CD4-positive, alpha-beta memory T cell (primary cell): ENCODE measurements at regions of chr3 and their contacts with region 1.

Region 1: GRCh38 chr3:97910931-97911351 is 61.3 kb downstream of the RIOX2 start:
- DNase-seq: peak in 4 of 5 donors; percentile 58 to 68 (median 62)
- H3K4me3 ChIP-seq: no peak overlapping the region
- H3K4me3 Mint-ChIP-seq: peak overlapping the region; percentile 77 to 91 (median 88)
- H3K27ac ChIP-seq: peak overlapping the region; percentile 34
- H3K27ac Mint-ChIP-seq: peak overlapping the region; percentile 92 to 97 (median 96)
- H3K4me1 ChIP-seq: peaks cover 45% of the 10 kb centered on the region
- H3K4me1 Mint-ChIP-seq: peaks cover 27 to 42% (median 34%) of the 10 kb centered on the region in 4 donors
- H3K27me3 ChIP-seq: no peaks in the 10 kb centered on the region
- H3K27me3 Mint-ChIP-seq: no peaks in the 10 kb centered on the region

Region 2: DNA sequence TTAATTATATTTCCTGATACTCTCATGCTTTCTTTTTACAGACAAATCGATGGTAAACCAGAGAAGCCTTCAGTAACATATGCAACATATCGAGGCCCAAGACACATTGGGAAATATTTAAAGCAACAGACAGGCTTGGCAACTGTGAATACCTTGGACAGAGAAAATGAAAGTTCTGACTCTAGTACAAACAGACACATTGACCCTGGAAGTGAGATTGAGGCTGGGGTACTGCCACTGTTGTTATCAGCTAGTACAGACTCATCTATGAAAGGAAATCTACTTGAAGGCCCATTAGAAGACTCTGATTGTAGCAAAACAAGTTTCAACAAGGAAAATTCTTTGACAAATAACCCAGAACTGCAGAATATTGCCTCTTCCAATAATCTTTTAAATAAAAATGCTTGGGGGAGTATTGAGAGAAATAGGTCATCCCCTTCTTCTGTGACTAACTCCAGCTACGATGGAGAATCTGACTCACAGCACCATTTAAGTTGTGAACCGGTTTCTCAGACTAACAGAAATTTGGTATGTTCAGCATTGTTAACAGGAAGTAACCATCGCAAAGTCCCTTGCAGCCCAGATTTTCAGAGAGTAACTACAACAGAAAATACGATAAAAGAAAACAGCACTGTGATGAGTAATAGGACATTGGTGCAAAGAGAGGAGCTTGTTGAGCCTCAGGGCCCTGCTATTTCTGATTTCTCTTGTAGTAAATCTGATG is 39.0 kb before region 1 on chr3:
- CTCF ChIA-PET with region 1: no interaction called
- POLR2A ChIA-PET with region 1: interaction called, 10 read pairs
- intact Hi-C with region 1: loop called (anchors 5 kb)
- DNase-seq: peak; percentile 17 to 58 (median 30)
- H3K4me3 ChIP-seq: no peak overlapping the region
- H3K4me3 Mint-ChIP-seq: peak overlapping the region; percentile 33 to 86 (median 52)
- H3K27ac ChIP-seq: no peak overlapping the region
- H3K27ac Mint-ChIP-seq: peak overlapping the region; percentile 71 to 88 (median 81)
- H3K4me1 ChIP-seq: peaks cover 18% of the 10 kb centered on the region
- H3K4me1 Mint-ChIP-seq: peaks cover 18 to 26% (median 21%) of the 10 kb centered on the region in 4 donors
- H3K27me3 ChIP-seq: no peaks in the 10 kb centered on the region
- H3K27me3 Mint-ChIP-seq: no peaks in the 10 kb centered on the region

Region 3: GRCh38 chr3:97971677-97972567 is 61.0 kb after region 1 on chr3 and contains the start of gene RIOX2:
- CTCF ChIA-PET with region 1: no interaction called
- POLR2A ChIA-PET with region 1: interaction called, 3 read pairs
- intact Hi-C with region 1: loop called (anchors 1 kb)
- DNase-seq: peak; percentile 74 to 84 (median 80)
- H3K4me3 ChIP-seq: peak within 1 kb of the TSS in 1 of 2 donors; percentile 54
- H3K4me3 Mint-ChIP-seq: peak within 1 kb of the TSS; percentile 88 to 96 (median 94)
- H3K27ac ChIP-seq: peak within 1 kb of the TSS; percentile 41
- H3K27ac Mint-ChIP-seq: peak within 1 kb of the TSS; percentile 91 to 96 (median 95)
- H3K4me1 ChIP-seq: peaks cover 46% of the 10 kb centered on the region
- H3K4me1 Mint-ChIP-seq: peaks cover 39 to 70% (median 55%) of the 10 kb centered on the region in 4 donors
- H3K27me3 ChIP-seq: no peaks in the 10 kb centered on the region
- H3K27me3 Mint-ChIP-seq: no peaks in the 10 kb centered on the region
- total RNA-seq, gene RIOX2: 32.2 to 35.5 TPM